Activated CD8-positive, alpha-beta T cell treated with anti-CD3 and anti-CD28 coated beads, Interleukin-2, amount 10 ng/mL, durations not matched to agents 7 days and 5 days (primary cell): ENCODE measurements at regions of chr11 and their contacts with region 1.

Region 1: DNA sequence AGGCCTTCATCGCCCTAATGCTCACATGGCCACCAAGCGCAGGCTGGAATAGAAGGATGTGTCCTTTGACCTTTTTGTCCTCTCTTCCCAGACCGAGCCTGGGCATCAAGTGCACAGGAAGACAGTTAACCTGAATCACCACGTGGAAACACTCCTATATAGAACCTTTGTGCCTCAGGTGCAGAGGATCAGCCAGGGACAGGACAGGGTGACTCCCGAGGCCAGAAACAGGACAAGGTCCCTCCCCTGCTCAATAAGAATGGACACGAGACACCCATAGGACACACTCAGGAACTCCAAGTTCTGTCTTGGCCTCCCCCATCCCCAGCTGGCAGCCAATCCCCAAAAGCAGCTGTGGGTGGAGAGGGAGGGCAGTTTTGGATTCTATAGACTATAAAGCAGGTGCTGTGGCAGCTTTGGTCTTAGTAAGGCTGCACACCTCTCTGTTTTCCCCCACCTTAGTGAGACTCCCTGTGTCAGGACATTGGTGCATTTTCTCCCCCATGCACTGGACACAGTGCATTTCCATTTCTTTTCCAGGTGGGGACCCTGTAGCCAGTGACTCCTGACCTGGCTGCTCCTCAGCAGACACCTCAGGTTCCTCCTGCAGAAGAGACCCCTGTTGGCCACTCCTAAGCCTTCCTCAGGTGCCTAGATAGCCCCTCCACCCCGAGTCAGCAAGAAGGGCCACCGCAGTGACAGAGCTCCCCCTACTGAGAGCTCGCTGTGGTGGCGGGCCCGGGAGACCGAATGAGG is 43.6 kb upstream of the POU2AF1 start:
- DNase-seq: peak; percentile 63
- ATAC-seq: peak; percentile 73
- H3K4me3 Mint-ChIP-seq: no peak overlapping the region
- H3K27ac Mint-ChIP-seq: no peak overlapping the region
- H3K4me1 Mint-ChIP-seq: peaks cover 21% of the 10 kb centered on the region
- H3K27me3 Mint-ChIP-seq: peaks cover 2% of the 10 kb centered on the region

Region 2: GRCh38 chr11:111283945-111284481 is 138.7 kb before region 1 on chr11:
- CTCF ChIA-PET with region 1: interaction called, 95 read pairs
- POLR2A ChIA-PET with region 1: no interaction called
- DNase-seq: no peak
- ATAC-seq: no peak
- H3K4me3 Mint-ChIP-seq: no peak overlapping the region
- H3K27ac Mint-ChIP-seq: no peak overlapping the region
- H3K4me1 Mint-ChIP-seq: no peaks in the 10 kb centered on the region
- H3K27me3 Mint-ChIP-seq: peaks cover 3% of the 10 kb centered on the region

Region 3: DNA sequence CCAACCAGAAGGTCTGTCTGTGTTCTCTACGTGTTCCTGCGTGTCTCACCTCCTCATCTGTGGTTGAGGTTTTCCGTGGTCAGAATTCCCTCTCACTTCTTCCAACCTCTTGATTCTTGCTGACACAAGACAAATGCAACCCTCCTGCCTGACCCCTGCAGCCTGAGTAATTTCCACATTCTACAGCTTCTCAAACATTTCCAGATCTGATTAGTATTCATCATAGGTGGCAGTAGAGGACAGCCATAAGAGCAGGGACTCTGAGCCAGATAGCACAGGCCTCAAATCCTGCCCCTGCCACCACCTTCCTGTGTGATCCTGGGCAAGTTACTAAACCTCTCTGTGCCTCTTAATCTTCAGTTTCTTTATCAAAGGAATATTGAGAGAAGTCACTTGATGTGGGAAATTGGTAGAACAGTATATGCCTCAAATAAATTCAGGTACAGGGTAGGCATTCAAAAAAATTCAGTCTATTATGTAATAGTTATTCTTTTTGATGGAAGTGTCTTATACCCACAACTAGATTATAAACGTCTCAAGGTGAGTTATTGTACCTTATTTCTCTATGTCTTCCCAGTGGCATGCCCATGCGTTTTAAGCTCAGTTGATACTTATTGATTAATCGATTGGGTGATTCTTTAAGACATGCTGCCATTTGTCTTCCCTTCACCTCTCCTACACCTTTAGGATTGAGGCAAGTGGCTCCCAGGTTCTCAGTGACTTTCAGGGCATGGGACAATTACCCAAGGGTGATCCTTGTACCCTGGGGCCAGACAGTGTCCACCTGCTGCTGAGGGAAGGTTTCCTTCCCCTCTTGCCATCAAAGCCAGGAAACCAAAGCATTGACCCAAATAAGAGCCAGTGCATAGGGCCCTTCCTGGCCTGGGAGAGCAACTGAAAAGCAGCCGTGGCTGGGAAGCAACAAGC is 63.2 kb before region 1 on chr11:
- CTCF ChIA-PET with region 1: interaction called, 10 read pairs
- POLR2A ChIA-PET with region 1: no interaction called
- DNase-seq: no peak
- ATAC-seq: no peak
- H3K4me3 Mint-ChIP-seq: no peak overlapping the region
- H3K27ac Mint-ChIP-seq: no peak overlapping the region
- H3K4me1 Mint-ChIP-seq: no peaks in the 10 kb centered on the region
- H3K27me3 Mint-ChIP-seq: no peaks in the 10 kb centered on the region

Region 4: DNA sequence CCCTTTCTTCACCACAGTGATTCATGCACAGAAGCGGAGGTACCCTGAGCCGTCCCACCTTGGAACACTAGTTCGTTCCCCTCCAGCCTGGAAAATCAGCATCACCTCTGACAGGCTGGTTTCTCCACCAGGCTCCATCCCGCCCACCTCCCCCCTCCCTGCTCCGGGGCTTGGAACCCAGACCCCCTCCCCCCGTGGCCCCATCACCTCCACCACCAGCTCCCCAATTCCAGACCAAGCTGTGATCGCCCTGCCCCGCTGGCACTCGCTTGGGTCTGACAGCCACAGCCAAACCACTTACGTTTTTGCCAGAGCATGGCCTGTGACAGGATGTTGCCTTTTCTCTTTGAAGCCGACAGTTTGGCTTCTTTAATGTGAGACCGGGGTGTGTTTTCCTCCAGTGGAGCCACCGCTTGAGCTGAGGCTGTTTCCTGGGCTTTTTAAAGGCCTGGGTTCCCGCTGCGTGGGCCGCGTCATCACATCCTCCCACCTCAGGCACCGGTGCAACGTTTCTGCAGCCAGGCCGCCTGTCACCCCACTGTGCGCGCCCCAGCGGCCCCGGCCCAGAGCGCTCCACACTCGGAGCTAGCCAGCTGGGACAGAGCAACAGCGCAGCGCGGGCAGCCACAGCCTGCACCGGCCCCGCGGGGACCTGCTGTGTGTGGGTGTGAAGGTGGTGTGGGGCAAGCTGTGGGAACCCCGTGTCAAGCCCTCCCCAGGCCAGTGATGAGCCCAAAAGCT is 43.6 kb before region 1 on chr11 and contains the start of gene POU2AF1:
- CTCF ChIA-PET with region 1: interaction called, 8 read pairs
- POLR2A ChIA-PET with region 1: interaction called, 12 read pairs
- DNase-seq: peak; percentile 89
- ATAC-seq: peak; percentile 87
- H3K4me3 Mint-ChIP-seq: peak within 1 kb of the TSS; percentile 70
- H3K27ac Mint-ChIP-seq: peak within 1 kb of the TSS; percentile 95
- H3K4me1 Mint-ChIP-seq: peaks cover 41% of the 10 kb centered on the region
- H3K27me3 Mint-ChIP-seq: no peaks in the 10 kb centered on the region
- total RNA-seq, gene POU2AF1: 1.7 to 2.4 TPM

Region 5: DNA sequence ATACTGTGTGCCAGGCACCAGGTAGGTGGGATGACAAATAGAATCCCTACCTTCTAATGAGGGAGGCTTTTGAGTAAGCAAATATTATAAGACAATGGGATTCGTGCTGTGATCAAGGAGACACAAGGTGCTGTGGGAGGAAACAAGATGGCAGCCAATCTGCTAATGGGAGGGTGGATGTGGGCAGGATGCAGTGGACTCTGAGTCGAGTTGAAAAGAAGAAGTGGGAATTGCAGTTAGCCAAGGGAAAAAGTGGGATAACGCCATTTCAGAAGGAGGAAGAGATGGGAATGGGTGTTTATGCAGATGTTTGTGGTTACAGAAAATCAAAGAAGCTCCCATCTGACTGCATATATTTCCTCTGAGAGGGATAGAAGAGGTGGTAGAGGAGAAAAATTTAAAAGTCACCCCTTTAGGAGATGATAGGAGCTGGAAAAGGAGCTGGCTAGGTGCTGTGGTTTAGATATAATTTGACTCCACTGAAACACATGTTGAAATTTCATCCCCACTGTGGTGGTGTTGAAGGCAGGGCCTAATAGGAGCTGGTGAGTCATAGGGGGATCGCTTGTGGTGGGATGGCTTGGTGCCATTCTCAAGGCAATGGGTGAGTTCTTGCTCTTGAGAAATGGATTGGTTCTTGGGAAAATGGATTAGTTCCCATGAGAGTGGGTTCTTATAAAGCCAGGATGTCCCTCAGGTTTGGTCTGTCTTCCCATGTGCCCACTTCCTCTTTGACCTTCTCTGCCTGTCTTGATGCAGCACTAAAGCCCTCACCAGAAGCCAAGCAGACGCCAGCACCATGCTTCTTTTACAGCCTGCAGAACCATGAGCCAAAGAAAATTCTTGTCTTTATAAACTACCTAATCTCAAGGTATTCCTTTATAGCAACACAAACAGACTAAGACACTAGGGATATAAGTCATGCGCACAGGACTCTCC is 13.6 kb before region 1 on chr11:
- CTCF ChIA-PET with region 1: interaction called, 158 read pairs
- POLR2A ChIA-PET with region 1: no interaction called
- DNase-seq: no peak
- ATAC-seq: no peak
- H3K4me3 Mint-ChIP-seq: no peak overlapping the region
- H3K27ac Mint-ChIP-seq: no peak overlapping the region
- H3K4me1 Mint-ChIP-seq: peaks cover 22% of the 10 kb centered on the region
- H3K27me3 Mint-ChIP-seq: no peaks in the 10 kb centered on the region

Region 6: GRCh38 chr11:111446404-111447111 is 23.9 kb after region 1 on chr11:
- CTCF ChIA-PET with region 1: interaction called, 13 read pairs
- POLR2A ChIA-PET with region 1: no interaction called
- DNase-seq: peak; percentile 89
- ATAC-seq: peak; percentile 99
- H3K4me3 Mint-ChIP-seq: no peak overlapping the region
- H3K27ac Mint-ChIP-seq: peak overlapping the region; percentile 48
- H3K4me1 Mint-ChIP-seq: peaks cover 17% of the 10 kb centered on the region
- H3K27me3 Mint-ChIP-seq: peaks cover 4% of the 10 kb centered on the region